ENCODE measurements at regions of chr15 and their contacts with region 1.

Region 1: DNA sequence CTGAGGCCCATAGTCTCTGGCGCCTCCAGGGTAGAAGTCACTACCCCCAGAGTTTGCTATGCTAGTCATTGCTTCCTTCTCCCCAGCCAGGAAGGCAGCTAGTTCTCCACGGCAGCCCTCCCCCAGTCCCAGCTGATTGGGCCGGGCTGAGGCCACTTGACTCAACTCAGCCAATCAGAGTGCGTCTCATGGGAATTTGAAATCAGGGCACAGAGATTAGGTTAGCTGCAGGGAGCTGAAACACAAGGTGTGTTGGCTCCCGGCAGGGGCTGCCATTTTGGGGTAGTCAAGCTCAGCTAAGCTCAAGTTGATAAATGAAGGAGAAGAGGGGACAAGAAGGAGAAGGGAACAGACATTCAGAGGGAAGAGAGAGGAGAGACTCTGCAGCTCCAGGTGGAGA is 32.8 kb downstream of the LINGO1 start:
- DNase-seq: peak; percentile 58
- H3K4me3 Mint-ChIP-seq: no peak overlapping the region
- H3K27ac Mint-ChIP-seq: no peak overlapping the region
- H3K4me1 Mint-ChIP-seq: peaks cover 6% of the 10 kb centered on the region
- H3K27me3 Mint-ChIP-seq: peaks cover 7% of the 10 kb centered on the region

Region 2: GRCh38 chr15:76127880-76128279 is 1472.0 kb before region 1 on chr15:
- intact Hi-C with region 1: no loop called
- DNase-seq: no peak
- H3K4me3 Mint-ChIP-seq: no peak overlapping the region
- H3K27ac Mint-ChIP-seq: no peak overlapping the region
- H3K4me1 Mint-ChIP-seq: no peaks in the 10 kb centered on the region
- H3K27me3 Mint-ChIP-seq: peaks cover 14% of the 10 kb centered on the region

Region 3: GRCh38 chr15:77371850-77372563 is 227.9 kb before region 1 on chr15:
- intact Hi-C with region 1: no loop called
- DNase-seq: no peak
- H3K4me3 Mint-ChIP-seq: no peak overlapping the region
- H3K27ac Mint-ChIP-seq: no peak overlapping the region
- H3K4me1 Mint-ChIP-seq: peaks cover 15% of the 10 kb centered on the region
- H3K27me3 Mint-ChIP-seq: no peaks in the 10 kb centered on the region

Region 4: GRCh38 chr15:77659350-77660321 is 59.7 kb after region 1 on chr15:
- intact Hi-C with region 1: loop called (anchors 10 kb)
- DNase-seq: peak; percentile 62
- H3K4me3 Mint-ChIP-seq: no peak overlapping the region
- H3K27ac Mint-ChIP-seq: no peak overlapping the region
- H3K4me1 Mint-ChIP-seq: no peaks in the 10 kb centered on the region
- H3K27me3 Mint-ChIP-seq: peaks cover 5% of the 10 kb centered on the region

Region 5: GRCh38 chr15:77727635-77728304 is 127.9 kb after region 1 on chr15:
- intact Hi-C with region 1: no loop called
- DNase-seq: no peak
- H3K4me3 Mint-ChIP-seq: no peak overlapping the region
- H3K27ac Mint-ChIP-seq: no peak overlapping the region
- H3K4me1 Mint-ChIP-seq: no peaks in the 10 kb centered on the region
- H3K27me3 Mint-ChIP-seq: no peaks in the 10 kb centered on the region

Region 6: DNA sequence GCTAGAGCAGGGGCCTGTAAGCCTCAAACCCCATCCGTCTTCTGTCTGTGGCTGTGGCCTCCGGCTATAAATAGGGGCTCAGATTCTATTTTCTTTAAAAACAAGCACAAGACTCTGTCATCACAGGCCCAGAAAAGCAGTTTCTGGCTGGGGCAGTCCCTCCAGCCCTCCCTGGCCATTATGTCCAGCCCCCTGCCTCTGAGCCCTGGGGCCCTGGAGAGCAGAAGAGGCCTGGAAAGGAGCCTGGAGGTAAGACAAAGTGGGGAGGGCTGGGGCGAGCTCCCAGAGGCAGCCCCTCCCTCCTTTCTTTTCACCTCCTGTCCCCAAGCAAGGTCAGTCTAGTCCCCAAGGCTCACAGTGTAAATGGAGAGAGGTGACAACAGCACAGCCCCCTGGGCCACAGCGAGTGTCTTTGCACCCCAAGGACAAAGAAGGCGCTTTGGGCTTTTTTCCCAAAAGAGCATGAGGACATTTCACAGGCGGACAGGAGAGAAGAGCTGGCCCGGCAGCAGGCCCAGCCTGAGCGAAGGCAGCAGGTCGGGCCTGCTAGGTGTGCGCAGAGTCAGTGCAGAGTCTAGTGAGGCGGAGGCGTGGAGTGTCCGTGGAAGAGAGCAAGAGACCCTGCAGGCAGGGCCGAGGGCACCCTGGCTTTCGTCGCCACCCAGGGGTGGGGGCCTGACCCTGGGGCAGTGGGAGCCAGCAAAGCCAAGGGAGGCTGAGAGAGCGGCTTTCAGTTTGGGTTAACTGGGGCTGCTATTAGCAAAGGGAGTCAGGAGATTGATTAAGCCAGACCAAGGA is 289.3 kb after region 1 on chr15:
- intact Hi-C with region 1: no loop called
- DNase-seq: no peak
- H3K4me3 Mint-ChIP-seq: no peak overlapping the region
- H3K27ac Mint-ChIP-seq: no peak overlapping the region
- H3K4me1 Mint-ChIP-seq: no peaks in the 10 kb centered on the region
- H3K27me3 Mint-ChIP-seq: no peaks in the 10 kb centered on the region